Activated B cell treated with CpG ODN at 0.5 μM for 24 hours (primary cell): ENCODE measurements at regions of chr19 and their contacts with region 1.

Region 1: GRCh38 chr19:11738746-11739620 is at the start of gene ZNF823:
- DNase-seq: peak; percentile 87
- ATAC-seq: peak; percentile 98
- H3K4me3 Mint-ChIP-seq: peak within 1 kb of the TSS; percentile 99
- H3K27ac Mint-ChIP-seq: peak within 1 kb of the TSS; percentile 91
- H3K4me1 Mint-ChIP-seq: peaks cover 25% of the 10 kb centered on the region
- H3K27me3 Mint-ChIP-seq: peaks cover 1% of the 10 kb centered on the region
- CTCF ChIP-seq: no peak
- total RNA-seq, gene ZNF823: 2.6 and 3.0 TPM in 2 replicates

Region 2: GRCh38 chr19:11694533-11695439 is 44.2 kb before region 1 on chr19:
- CTCF ChIA-PET with region 1: interaction called, 3 read pairs
- POLR2A ChIA-PET with region 1: interaction called, 12 read pairs
- intact Hi-C with region 1: loop called (anchors 2 kb)
- DNase-seq: peak; percentile 78
- ATAC-seq: peak; percentile 98
- H3K4me3 Mint-ChIP-seq: peak overlapping the region; percentile 91
- H3K27ac Mint-ChIP-seq: peak overlapping the region; percentile 41
- H3K4me1 Mint-ChIP-seq: peaks cover 16% of the 10 kb centered on the region
- H3K27me3 Mint-ChIP-seq: peaks cover 26% of the 10 kb centered on the region
- CTCF ChIP-seq: no peak

Region 3: GRCh38 chr19:11798391-11799330 is 59.7 kb after region 1 on chr19 and contains the start of gene ZNF491:
- CTCF ChIA-PET with region 1: interaction called, 3 read pairs
- POLR2A ChIA-PET with region 1: no interaction called
- intact Hi-C with region 1: loop called (anchors 1 kb)
- DNase-seq: peak; percentile 77
- ATAC-seq: peak; percentile 99
- H3K4me3 Mint-ChIP-seq: peak within 1 kb of the TSS; percentile 91
- H3K27ac Mint-ChIP-seq: peak within 1 kb of the TSS; percentile 71
- H3K4me1 Mint-ChIP-seq: peaks cover 25% of the 10 kb centered on the region
- H3K27me3 Mint-ChIP-seq: no peaks in the 10 kb centered on the region
- CTCF ChIP-seq: no peak
- total RNA-seq, gene ZNF491: 1.4 and 1.7 TPM in 2 replicates

Region 4: DNA sequence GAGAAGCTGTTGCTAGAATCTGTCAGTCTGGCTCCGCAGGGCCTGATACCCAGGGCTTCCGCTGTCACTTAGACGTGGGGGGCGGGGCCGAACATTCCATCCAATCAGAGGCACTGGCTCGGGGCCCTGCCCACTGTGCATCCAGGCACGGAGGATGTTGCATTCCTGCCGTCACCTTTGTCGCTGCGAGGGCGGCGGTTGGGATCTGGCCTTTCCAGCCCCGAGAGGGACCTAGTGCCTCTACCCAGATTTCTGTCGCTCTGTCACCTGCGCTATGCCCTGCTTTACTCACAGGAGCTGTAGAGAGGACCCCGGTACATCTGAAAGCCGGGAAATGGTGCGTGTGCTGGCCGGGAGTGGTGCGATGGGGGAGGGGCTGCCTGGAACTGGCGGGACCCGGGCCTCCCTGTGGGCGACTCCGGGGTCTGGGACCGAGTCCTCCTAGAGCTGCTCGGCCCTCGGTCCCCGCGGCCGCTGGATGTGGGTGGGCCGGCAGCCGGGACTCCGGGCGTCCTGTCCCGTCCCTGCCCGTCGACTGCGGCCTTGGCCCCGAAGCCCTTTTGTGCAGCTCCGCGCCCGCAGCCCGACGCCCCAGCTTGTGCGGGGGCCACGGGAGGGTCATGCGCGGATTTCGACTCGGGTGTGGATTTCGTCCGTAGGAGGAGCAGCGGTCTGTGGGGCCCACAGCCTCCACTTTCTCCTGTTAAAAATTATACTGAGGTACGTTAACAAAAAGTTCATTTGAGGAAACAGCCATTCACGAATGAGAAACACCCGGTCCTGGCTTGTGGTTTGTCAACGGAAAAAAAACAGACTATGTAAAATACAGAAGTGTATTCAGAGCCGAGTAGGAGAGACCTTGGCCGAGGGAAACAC is 109.8 kb after region 1 on chr19 and contains the start of gene ZNF439:
- CTCF ChIA-PET with region 1: no interaction called
- POLR2A ChIA-PET with region 1: no interaction called
- intact Hi-C with region 1: loop called (anchors 1 kb)
- DNase-seq: peak; percentile 87
- ATAC-seq: peak; percentile 99
- H3K4me3 Mint-ChIP-seq: peak within 1 kb of the TSS; percentile 94
- H3K27ac Mint-ChIP-seq: peak within 1 kb of the TSS; percentile 92
- H3K4me1 Mint-ChIP-seq: peaks cover 36% of the 10 kb centered on the region
- H3K27me3 Mint-ChIP-seq: no peaks in the 10 kb centered on the region
- CTCF ChIP-seq: no peak
- total RNA-seq, gene ZNF439: 19.9 and 22.8 TPM in 2 replicates

Region 5: DNA sequence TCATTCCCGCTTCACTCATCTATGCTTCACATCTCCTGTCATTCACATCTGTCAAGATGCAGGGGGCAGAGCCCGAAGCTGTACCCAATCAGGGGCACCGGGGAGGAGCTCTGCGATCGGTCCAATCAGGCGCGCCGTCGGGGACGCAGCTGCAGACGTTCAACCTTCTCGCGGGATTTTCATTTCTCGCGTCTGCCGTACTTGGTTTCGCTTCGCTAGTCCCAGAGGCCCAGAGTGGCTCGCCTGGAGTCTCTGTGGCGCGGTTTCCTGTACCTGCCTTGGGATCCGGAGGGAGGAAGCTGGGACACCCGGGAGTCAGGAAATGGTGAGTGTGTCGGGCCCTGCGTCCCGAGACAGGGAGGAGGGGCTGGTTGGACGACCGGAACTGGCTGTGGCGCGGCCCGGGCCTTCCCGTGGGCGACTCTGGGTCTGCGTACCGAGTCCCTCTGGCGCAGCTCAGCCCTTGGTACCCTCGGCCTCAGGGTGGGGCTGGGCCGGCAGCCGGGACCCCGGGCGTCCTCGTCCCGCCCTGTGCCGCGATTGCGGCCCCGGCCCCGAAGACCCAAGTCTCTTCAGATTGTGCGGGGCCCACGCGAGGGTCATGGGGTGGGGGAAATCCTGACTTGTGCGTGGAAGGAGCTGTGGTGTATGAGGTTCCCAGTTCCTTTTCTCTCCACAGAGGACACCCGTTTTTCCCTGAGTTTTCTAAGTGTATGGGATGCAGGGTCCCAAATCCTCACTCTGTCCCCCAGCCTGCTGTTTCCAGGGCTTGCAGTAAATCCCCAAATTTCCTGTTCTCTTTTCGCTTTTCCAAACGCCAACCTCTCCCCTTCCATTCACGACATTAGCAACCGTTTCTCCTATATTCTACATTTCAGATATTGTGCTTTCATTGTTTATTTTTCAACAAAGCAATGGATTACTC is 424.2 kb after region 1 on chr19 and contains the start of gene ZNF136:
- CTCF ChIA-PET with region 1: no interaction called
- POLR2A ChIA-PET with region 1: no interaction called
- intact Hi-C with region 1: loop called (anchors 1 kb)
- DNase-seq: peak; percentile 83
- ATAC-seq: peak; percentile 99
- H3K4me3 Mint-ChIP-seq: peak within 1 kb of the TSS; percentile 96
- H3K27ac Mint-ChIP-seq: peak within 1 kb of the TSS; percentile 97
- H3K4me1 Mint-ChIP-seq: peaks cover 44% of the 10 kb centered on the region
- H3K27me3 Mint-ChIP-seq: no peaks in the 10 kb centered on the region
- CTCF ChIP-seq: no peak
- total RNA-seq, gene ZNF136: 20.4 and 24.6 TPM in 2 replicates